AG04449 (cell line): ENCODE measurements at regions of chr19 and their contacts with region 1.

Region 1: DNA sequence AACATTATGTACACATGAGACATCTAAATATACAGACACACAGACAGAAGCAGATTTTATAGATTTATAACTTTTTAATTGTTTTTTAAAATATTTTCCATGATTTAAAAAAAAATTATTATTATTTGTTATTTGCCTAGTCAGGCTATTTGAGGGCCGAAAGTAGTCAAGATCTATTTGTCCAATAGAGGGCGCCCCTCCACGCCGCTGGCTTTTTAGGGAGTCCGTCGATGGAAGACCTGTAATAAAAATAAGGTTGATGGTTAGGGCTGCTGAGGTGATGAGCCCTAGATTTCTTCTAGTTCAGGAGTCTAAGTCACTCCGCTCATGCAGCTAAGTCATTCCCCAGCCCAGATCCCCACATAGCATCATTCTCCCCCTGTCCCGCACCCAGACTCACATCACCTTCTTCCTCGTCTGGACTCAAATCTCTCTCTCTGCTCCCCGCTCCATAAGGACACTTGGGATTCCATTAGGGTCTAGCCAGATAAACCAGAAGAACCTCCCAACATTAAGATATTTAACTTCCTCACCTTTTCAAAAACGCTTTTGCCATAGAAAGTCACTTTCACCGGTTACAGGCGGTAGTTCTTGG is 33.9 kb upstream of the CEACAM21 start:
- DNase-seq: no peak
- H3K4me3 ChIP-seq: no peak overlapping the region
- CTCF ChIP-seq: peak; percentile 24

Region 2: DNA sequence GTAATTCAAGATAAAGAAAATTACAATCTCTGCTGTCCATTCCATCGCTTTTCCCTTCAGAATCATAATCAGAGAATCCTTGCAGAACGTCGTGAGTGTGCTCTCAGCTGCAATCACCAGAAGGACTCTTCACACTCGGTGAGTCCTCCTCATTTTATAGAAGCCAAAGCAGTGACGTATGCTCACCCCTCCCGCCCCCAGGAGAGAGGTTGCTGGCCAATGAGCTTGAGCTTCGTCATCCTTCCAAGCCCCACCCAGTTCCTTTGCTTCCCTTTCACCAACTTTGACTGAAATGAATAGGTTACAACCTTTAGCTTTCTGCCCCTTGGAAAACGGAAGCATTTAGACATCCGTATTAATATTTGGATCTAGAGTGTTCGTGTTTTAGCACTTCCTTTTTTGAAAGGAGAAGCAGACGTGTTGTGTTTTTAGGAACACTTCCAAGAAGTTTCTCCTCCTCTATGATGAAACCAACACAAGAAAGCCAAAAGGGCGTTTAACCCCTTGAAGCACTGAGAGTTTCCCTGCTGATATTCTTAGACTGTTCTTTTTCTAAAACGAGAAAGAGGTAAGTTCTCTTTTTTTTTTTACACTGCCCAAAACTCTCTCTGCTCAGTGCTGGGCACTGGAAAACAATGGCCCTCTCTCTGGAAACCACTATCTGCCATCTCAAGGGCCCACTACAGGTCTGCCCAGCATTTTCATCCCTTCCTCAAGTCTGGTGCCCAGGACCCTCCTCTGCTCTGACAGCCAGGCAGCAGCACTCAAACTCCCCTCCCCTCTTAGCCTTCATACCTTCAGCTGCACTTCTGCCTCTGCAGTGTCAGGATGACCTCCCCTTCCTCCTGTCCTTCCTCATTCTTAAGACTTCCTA is 10.4 kb before region 1 on chr19:
- CTCF ChIA-PET with region 1: interaction called, 10 read pairs
- POLR2A ChIA-PET with region 1: no interaction called
- DNase-seq: no peak
- H3K4me3 ChIP-seq: no peak overlapping the region; the same call in 1 of the 2 replicates
- CTCF ChIP-seq: no peak